ENCODE measurements at regions of chr7 and their contacts with region 1.

Region 1: DNA sequence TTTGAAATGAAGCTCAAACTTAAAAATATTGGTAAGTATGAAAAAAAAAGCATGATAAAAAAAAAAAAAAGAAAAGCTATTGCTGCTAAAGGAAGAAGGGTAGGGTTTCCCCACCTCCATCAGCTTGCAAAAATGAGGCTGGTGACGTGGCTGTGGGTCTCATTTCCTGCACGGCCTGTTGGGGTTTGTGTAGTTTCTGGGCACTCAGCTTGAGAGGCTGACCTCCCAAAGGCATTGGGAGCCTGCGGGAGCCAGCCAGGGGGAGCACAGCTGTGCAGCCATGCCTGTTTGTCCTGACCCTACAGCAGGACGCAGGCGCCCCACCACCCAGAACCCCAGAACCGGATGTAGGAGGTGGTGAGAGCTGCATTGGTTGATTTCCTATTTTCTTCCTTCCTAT is 48.8 kb upstream of the CARD11 start:
- DNase-seq: peak; percentile 74
- H3K4me3 Mint-ChIP-seq: peak overlapping the region; percentile 15
- H3K27ac Mint-ChIP-seq: peak overlapping the region; percentile 94
- H3K4me1 Mint-ChIP-seq: peaks cover 56% of the 10 kb centered on the region
- H3K27me3 Mint-ChIP-seq: no peaks in the 10 kb centered on the region

Region 2: DNA sequence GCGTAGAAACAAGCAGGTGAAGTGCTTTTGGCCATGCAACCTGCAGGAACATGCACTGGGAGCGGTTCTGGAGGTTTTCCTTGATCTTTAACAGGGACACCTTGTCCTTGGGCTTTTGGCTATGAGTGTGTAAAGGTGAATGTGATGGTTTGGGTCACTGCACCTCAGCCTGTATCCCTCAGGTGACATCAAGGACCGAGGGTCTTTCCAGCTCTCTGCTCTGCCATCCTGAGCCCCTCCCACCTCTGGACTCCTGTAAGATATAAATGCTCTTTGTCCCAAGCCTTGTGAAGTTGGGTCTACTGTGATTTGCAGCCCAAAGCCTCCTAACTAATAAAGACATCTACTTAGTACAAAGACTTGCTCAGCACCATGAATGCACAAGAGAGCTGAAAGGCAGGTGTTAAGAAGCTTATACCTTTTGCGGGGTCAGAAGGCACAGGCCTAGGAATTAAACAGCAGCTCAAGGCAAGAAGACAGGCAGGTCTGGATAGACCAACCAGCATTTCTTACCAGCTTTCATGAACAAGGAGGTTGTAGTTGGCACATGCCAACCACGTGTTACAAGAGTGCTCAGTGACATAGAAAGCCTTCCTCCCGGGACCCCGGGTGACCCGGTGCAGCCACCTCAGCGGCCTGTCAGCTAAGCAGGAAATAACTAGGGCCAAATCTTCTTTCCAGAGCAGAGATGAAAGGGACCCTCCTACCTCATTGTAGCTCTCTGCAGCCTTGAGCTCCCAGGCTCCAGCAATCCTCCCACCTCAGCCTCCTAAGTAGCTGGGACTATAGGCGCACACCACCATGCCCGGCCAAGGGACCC is 138.7 kb before region 1 on chr7:
- intact Hi-C with region 1: no loop called
- DNase-seq: no peak
- H3K4me3 Mint-ChIP-seq: peak overlapping the region; percentile 47
- H3K27ac Mint-ChIP-seq: peak overlapping the region; percentile 77
- H3K4me1 Mint-ChIP-seq: peaks cover 84% of the 10 kb centered on the region
- H3K27me3 Mint-ChIP-seq: no peaks in the 10 kb centered on the region

Region 3: GRCh38 chr7:3117488-3118231 is 25.2 kb after region 1 on chr7:
- intact Hi-C with region 1: loop called (anchors 1 kb)
- DNase-seq: no peak
- H3K4me3 Mint-ChIP-seq: peak overlapping the region; percentile 86
- H3K27ac Mint-ChIP-seq: peak overlapping the region; percentile 90
- H3K4me1 Mint-ChIP-seq: peaks cover 68% of the 10 kb centered on the region
- H3K27me3 Mint-ChIP-seq: peaks cover 5% of the 10 kb centered on the region

Region 4: GRCh38 chr7:3179456-3179855 is 87.0 kb after region 1 on chr7:
- intact Hi-C with region 1: no loop called
- DNase-seq: no peak
- H3K4me3 Mint-ChIP-seq: no peak overlapping the region
- H3K27ac Mint-ChIP-seq: no peak overlapping the region
- H3K4me1 Mint-ChIP-seq: no peaks in the 10 kb centered on the region
- H3K27me3 Mint-ChIP-seq: peaks cover 5% of the 10 kb centered on the region

Measured in activated T-helper 1 cell treated with anti-CD3 and anti-CD28 coated beads, Interleukin-12 subunit alpha, Interleukin-12 subunit beta, Interleukin-2, Interleukin-4 antibody, amounts not matched to agents 30 ng/mL and 10 ng/mL and 1 ng/mL, durations not matched to agents 14 hours and 24 hours and 36 hours (primary cell).